ENCODE measurements at regions of chr19 and their contacts with region 1.

Region 1: GRCh38 chr19:12789904-12790619 is 1.2 kb upstream of the JUNB start:
- DNase-seq: peak; percentile 95
- H3K4me3 ChIP-seq: peak overlapping the region; percentile 84
- H3K27ac ChIP-seq: peak overlapping the region; percentile 77
- H3K4me1 ChIP-seq: peaks cover 54% of the 10 kb centered on the region
- CTCF ChIP-seq: no peak

Region 2: DNA sequence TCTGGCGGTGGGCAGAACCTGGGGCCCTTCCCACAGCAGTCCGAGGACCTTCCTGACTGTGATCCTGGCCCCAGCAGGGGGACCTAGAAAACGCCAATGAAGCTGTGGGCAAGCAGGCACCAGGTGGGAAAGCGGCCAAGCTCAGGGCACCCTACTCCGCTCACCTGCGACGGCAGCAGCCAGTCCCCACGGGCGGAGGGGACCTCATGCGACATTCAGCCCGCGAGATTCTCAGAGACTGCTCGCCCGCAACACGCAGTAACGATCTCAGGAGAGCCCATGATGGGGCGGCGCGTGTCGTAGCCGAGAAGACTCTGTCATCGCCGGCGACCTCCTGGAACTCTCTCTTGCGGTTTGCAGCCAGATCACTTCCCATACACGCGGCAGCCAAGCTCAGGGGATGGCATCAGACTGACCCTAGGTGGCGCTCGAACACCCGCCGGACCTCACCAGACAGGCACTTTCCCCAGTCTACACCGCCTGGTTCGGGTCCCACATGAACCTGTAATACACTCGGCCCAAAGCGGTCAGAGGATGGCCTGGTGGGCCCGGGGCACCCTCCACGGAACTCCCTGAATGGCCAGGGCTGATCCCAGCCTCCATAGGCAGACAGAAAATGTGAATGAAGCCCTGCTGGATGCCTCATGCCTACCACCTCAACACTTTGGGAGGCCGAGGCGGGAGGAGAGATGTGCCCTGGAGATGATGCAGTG is 150.0 kb before region 1 on chr19:
- CTCF ChIA-PET with region 1: no interaction called
- POLR2A ChIA-PET with region 1: no interaction called
- intact Hi-C with region 1: no loop called
- DNase-seq: peak; percentile 83
- H3K4me3 ChIP-seq: no peak overlapping the region
- H3K27ac ChIP-seq: no peak overlapping the region
- H3K4me1 ChIP-seq: peaks cover 6% of the 10 kb centered on the region
- CTCF ChIP-seq: peak; percentile 86

Region 3: GRCh38 chr19:12722566-12723380 is 67.3 kb before region 1 on chr19:
- CTCF ChIA-PET with region 1: no interaction called
- POLR2A ChIA-PET with region 1: no interaction called
- intact Hi-C with region 1: loop called (anchors 5 kb)
- DNase-seq: peak; percentile 100
- H3K4me3 ChIP-seq: peak overlapping the region; percentile 82
- H3K27ac ChIP-seq: peak overlapping the region; percentile 74
- H3K4me1 ChIP-seq: peaks cover 26% of the 10 kb centered on the region
- CTCF ChIP-seq: no peak

Region 4: GRCh38 chr19:12736995-12737834 is 52.8 kb before region 1 on chr19 and contains the start of gene GET3:
- CTCF ChIA-PET with region 1: no interaction called
- POLR2A ChIA-PET with region 1: interaction called, 4 read pairs
- intact Hi-C with region 1: loop called (anchors 2 kb)
- DNase-seq: peak; percentile 94
- H3K4me3 ChIP-seq: peak within 1 kb of the TSS; percentile 89
- H3K27ac ChIP-seq: peak within 1 kb of the TSS; percentile 51
- H3K4me1 ChIP-seq: peaks cover 31% of the 10 kb centered on the region
- CTCF ChIP-seq: no peak
- total RNA-seq, gene GET3: 40.5 and 48.8 TPM in 2 replicates

Region 5: DNA sequence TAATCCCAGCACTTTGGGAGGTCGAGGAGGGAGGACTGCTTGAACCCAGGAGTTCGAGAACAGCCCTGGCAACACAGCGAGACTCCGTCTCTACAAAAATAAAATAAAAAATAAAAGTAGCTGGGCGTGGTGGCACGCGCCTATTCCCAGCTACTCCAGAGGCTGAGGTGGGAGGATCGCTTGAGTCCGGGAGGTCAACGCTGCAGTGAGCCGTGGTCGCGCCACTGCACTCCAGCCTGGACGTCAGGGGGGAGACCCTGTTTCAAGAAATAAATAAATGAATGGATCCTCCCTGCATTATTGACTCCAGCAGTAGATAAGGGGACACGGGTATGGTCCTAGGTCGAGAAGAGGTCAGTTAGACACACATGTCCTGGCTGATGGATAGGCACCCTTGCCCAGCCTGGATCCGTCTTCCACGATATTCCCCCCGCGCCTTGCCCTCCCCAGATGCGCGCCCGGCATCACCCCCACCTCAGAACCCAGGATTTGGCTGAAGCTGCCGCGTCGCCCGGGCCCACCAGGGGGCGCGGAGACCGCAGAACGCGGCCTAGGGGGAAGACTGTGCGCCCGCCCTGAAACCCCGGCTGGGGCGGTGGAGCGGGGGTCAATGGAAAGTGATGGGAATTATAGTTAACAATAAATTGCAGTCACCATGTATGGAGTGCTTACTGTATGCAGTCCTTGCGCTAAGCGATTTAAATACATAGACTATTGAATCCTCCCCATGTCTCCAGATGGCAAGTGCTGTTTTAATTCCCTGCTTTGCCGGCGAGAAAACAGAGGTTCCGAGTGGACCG is 12.6 kb before region 1 on chr19:
- CTCF ChIA-PET with region 1: interaction called, 20 read pairs
- POLR2A ChIA-PET with region 1: interaction called, 10 read pairs
- intact Hi-C with region 1: loop called (anchors 1 kb)
- DNase-seq: peak; percentile 78
- H3K4me3 ChIP-seq: peak overlapping the region; percentile 69
- H3K27ac ChIP-seq: peak overlapping the region; percentile 56
- H3K4me1 ChIP-seq: peaks cover 44% of the 10 kb centered on the region
- CTCF ChIP-seq: peak; percentile 96

Region 6: DNA sequence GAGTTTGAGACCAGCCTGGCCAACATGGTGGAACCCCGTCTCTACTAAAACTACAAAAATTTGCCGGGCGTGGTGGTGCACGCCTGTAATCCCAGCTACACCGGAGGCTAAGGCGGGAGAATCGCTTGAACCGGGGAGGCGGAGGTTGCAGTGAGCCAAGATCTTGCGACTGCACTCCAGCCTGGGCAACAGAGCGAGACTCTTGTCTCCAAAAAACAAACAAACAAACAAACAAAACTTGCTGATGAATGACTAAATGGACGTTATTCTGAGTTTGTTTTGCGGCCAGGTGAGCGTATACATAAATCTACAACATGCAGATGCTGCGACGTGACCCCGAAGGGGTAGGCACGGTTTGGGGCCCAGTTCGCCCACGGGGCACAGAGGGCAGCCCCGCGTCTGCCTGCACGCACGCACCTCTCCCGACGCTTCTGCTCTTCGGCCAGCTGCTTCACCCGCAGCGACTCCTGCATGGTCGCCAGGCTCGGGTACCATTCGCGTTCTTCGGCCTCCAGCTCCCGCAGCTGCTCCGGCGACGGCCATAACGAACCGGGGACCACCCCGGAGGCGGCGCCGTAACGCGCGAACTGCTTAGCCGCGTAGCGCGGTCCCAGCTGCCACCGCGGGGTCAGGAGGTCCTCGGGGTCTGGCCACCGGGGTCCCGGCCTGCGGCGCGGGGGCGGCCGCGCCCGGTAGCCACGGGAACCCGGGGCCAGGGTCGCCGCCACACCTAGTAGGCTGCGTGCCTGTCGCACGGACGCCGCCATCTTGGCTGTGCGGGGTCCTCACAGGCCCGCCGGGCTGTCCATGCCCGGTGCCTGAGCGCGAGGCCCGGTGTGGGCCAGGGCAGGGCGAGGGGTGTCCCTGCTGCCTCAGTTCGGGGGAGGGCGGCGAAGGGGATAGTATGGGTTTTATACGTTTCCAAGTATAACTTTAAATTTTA is 166.7 kb after region 1 on chr19 and contains the start of gene GADD45GIP1:
- CTCF ChIA-PET with region 1: no interaction called
- POLR2A ChIA-PET with region 1: no interaction called
- intact Hi-C with region 1: no loop called
- DNase-seq: peak; percentile 86
- H3K4me3 ChIP-seq: peak within 1 kb of the TSS; percentile 78
- H3K27ac ChIP-seq: peak within 1 kb of the TSS; percentile 84
- H3K4me1 ChIP-seq: peaks cover 38% of the 10 kb centered on the region
- CTCF ChIP-seq: no peak
- total RNA-seq, gene GADD45GIP1: 29.5 and 43.0 TPM in 2 replicates